Pancreas (tissue), 10 donors: ENCODE measurements at regions of chr10 and their contacts with region 1.

Region 1: GRCh38 chr10:60662917-60663614 is 115.2 kb upstream of the CDK1 start:
- DNase-seq: no peak
- ATAC-seq: peak in 1 of 4 donors; percentile 59
- H3K4me3 ChIP-seq: no peak overlapping the region
- H3K27ac ChIP-seq: no peak overlapping the region
- H3K4me1 ChIP-seq: no peaks in the 10 kb centered on the region
- H3K27me3 ChIP-seq: no peaks in the 10 kb centered on the region
- CTCF ChIP-seq: no peak

Region 2: GRCh38 chr10:59508296-59508695 is 1154.8 kb before region 1 on chr10:
- intact Hi-C with region 1: no loop called
- DNase-seq: no peak
- ATAC-seq: no peak
- H3K4me3 ChIP-seq: no peak overlapping the region
- H3K27ac ChIP-seq: no peak overlapping the region
- H3K4me1 ChIP-seq: no peaks in the 10 kb centered on the region
- H3K27me3 ChIP-seq: no peaks in the 10 kb centered on the region
- CTCF ChIP-seq: no peak

Region 3: GRCh38 chr10:60687679-60688078 is 24.6 kb after region 1 on chr10:
- intact Hi-C with region 1: loop called in 1 of 3 experiments (anchors 2 kb)
- DNase-seq: no peak
- ATAC-seq: no peak
- H3K4me3 ChIP-seq: no peak overlapping the region
- H3K27ac ChIP-seq: no peak overlapping the region
- H3K4me1 ChIP-seq: no peaks in the 10 kb centered on the region
- H3K27me3 ChIP-seq: no peaks in the 10 kb centered on the region
- CTCF ChIP-seq: no peak

Region 4: GRCh38 chr10:60955957-60956425 is 292.9 kb after region 1 on chr10:
- intact Hi-C with region 1: no loop called
- DNase-seq: no peak
- ATAC-seq: peak; percentile 71 to 89 (median 84)
- H3K4me3 ChIP-seq: no peak overlapping the region
- H3K27ac ChIP-seq: peak overlapping the region in 1 of 4 donors; percentile 11
- H3K4me1 ChIP-seq: peaks cover 0 to 38% (median 24%) of the 10 kb centered on the region in 3 donors
- H3K27me3 ChIP-seq: no peaks in the 10 kb centered on the region
- CTCF ChIP-seq: no peak